Activated CD4-positive, alpha-beta T cell treated with anti-CD3 and anti-CD28 coated beads for 36 hours (primary cell): ENCODE measurements at regions of chrX and their contacts with region 1.

Region 1: DNA sequence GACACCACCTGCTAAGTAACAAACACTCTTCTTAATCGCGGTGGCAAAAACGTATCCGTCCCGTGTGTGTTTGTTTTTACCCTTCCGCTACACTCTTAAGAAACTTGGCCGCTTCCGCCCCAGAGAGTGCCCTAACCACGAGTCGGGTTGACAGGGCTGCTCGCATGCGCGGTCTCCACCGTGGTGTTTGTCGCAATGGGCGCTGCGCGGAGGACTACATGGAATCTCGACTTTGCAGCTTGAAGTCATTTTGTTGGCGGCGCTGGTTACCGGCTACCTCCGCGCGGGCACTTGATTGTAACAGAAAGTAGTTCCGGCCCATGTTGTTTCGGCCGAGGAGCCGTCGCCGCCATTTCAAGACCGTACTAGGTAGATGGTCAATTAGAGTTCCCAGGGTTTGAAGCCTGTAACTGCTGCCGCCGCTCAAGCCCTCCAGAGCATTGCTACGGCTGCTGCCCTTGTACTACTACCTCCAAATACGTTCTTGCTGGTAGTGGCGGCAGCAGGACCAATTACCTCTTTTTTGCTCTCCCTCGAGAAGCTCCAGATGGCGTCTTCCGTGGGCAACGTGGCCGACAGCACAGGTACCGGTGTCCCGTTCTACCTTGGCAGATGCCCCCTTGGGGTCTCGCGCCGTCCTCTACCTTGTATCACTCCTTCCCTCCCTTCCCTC is at the start of gene OGT:
- DNase-seq: peak; percentile 96
- ATAC-seq: peak; percentile 76
- H3K4me3 Mint-ChIP-seq: peak within 1 kb of the TSS; percentile 96
- H3K27ac Mint-ChIP-seq: peak within 1 kb of the TSS; percentile 98
- H3K4me1 Mint-ChIP-seq: peaks cover 26% of the 10 kb centered on the region
- H3K27me3 Mint-ChIP-seq: no peaks in the 10 kb centered on the region
- total RNA-seq, gene OGT: 331 to 339 TPM

Region 2: DNA sequence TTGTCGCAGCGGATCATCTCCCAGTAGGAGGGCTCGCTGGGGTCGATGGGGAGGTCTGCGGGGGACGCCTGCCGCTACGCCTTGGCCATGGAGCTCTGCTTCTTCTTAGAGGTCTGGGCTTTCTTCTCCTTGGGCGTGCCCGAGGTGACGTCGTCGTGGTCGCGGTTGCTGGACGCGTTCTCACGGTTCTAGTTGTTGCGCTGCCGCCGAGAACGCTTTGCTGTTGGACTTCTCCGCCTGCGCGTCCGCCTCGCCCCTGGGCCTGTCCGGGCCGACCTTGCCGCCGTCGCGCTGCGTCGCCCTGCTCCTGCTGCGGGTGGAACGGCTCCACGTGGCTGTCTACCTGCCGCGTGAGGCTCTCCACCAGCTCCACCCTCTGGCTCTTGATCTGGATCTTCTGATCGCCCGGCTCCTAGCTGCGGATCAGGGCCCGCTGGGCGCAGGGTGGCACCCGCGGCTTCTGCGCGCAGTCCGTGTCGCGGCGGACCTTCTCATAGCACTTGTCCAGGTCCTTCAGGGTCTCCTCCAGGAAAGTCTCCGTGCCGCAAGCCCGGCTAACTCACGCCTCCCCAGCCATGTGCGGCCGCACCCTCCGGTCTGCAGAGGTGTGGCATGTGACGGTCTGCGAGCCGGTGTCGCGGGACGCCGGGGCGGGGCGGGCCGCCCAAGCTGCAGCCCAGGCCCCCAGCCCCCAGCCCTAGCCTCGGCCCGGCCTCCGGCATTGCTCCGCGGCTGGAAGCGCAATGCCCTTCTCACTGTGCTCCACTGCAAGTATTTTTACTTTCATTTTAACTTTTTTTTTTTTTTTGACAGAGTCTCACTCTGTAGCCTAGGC is 40.4 kb before region 1 on chrX:
- CTCF ChIA-PET with region 1: interaction called, 3 read pairs
- POLR2A ChIA-PET with region 1: interaction called, 3 read pairs
- intact Hi-C with region 1: loop called (anchors 2 to 5 kb)
- DNase-seq: peak; percentile 61
- ATAC-seq: peak; percentile 78
- H3K4me3 Mint-ChIP-seq: peak overlapping the region; percentile 76
- H3K27ac Mint-ChIP-seq: peak overlapping the region; percentile 67
- H3K4me1 Mint-ChIP-seq: peaks cover 14% of the 10 kb centered on the region
- H3K27me3 Mint-ChIP-seq: no peaks in the 10 kb centered on the region